Cardiac septum (tissue), 1 donor: ENCODE measurements at regions of chrX and their contacts with region 1.

Region 1: DNA sequence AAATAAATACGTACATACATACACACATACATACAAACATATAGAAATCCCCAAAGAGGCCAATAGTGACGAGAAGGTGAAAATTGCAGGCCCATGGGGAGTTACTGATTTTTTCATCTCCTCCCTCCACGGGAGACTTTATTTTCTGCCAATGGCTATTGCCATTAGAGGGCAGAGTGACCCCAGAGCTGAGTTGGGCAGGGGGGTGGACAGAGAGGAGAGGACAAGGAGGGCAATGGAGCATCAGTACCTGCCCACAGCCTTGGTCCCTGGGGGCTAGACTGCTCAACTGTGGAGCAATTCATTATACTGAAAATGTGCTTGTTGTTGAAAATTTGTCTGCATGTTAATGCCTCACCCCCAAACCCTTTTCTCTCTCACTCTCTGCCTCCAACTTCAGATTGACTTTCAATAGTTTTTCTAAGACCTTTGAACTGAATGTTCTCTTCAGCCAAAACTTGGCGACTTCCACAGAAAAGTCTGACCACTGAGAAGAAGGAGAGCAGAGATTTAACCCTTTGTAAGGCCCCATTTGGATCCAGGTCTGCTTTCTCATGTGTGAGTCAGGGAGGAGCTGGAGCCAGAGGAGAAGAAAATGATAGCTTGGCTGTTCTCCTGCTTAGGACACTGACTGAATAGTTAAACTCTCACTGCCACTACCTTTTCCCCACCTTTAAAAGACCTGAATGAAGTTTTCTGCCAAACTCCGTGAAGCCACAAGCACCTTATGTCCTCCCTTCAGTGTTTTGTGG is 180.7 kb downstream of the AR start:
- DNase-seq: no peak

Region 2: DNA sequence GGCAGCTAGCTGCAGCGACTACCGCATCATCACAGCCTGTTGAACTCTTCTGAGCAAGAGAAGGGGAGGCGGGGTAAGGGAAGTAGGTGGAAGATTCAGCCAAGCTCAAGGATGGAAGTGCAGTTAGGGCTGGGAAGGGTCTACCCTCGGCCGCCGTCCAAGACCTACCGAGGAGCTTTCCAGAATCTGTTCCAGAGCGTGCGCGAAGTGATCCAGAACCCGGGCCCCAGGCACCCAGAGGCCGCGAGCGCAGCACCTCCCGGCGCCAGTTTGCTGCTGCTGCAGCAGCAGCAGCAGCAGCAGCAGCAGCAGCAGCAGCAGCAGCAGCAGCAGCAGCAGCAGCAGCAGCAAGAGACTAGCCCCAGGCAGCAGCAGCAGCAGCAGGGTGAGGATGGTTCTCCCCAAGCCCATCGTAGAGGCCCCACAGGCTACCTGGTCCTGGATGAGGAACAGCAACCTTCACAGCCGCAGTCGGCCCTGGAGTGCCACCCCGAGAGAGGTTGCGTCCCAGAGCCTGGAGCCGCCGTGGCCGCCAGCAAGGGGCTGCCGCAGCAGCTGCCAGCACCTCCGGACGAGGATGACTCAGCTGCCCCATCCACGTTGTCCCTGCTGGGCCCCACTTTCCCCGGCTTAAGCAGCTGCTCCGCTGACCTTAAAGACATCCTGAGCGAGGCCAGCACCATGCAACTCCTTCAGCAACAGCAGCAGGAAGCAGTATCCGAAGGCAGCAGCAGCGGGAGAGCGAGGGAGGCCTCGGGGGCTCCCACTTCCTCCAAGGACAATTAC is 179.3 kb before region 1 on chrX:
- intact Hi-C with region 1: loop called (anchors 5 kb)
- DNase-seq: peak; percentile 78

Region 3: GRCh38 chrX:67780694-67781109 is 56.2 kb after region 1 on chrX:
- intact Hi-C with region 1: loop called (anchors 5 kb)
- DNase-seq: peak; percentile 87

Region 4: DNA sequence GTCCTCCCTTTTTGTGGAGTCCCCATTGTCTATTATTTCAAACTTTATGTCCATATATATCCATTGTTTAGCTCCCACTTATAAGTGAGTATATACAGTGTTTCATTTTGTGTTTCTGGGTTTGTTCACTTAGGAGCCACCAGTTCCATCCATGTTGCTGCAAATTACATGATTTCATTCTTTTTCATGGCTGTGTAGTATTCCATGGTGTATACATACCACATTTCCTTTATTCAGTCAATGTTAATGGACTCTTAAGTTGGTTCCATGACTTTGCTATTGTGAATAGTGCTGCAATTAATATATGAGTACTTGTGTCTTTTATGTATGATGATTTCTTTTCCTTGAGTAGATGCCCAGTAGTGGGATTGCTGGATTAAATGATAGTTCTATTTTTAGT is 148.4 kb after region 1 on chrX:
- intact Hi-C with region 1: no loop called
- DNase-seq: no peak

Region 5: DNA sequence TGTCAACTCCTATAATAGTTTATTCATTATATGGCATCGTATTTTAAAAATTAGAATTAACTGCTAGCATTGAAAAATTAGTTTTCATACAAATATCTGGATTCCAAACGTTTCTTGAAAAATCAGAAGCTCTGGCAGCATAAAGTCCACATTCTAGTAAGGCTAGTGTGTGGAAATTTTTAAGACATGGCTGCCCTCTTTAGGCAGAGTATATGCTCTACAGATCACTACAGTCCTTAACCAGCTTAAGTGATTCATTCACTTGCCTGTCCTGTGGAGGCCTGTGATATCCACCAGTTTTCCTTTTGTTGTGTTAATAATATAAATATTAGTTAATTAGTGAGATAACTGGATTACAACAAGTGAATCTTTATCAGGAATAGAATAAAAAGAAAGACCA is 421.5 kb after region 1 on chrX:
- intact Hi-C with region 1: loop called (anchors 10 kb)
- DNase-seq: no peak